ENCODE measurements at regions of chr11 and their contacts with region 1.

Region 1: GRCh38 chr11:3797329-3798095 is at the start of gene NUP98:
- DNase-seq: peak; percentile 100
- ATAC-seq: peak; percentile 91
- H3K4me3 ChIP-seq: peak within 1 kb of the TSS; percentile 93 to 98 (median 96)
- H3K4me3 Mint-ChIP-seq: peak within 1 kb of the TSS; percentile 97
- H3K27ac ChIP-seq: peak within 1 kb of the TSS; percentile 93 to 97
- H3K27ac Mint-ChIP-seq: peak within 1 kb of the TSS; percentile 97
- H3K4me1 ChIP-seq: peaks cover 21 to 31% of the 10 kb centered on the region in 2 donors
- H3K4me1 Mint-ChIP-seq: peaks cover 35% of the 10 kb centered on the region
- H3K27me3 ChIP-seq: no peaks in the 10 kb centered on the region
- H3K27me3 Mint-ChIP-seq: no peaks in the 10 kb centered on the region
- CTCF ChIP-seq: no peak
- total RNA-seq, gene NUP98: 105 and 111 TPM in 2 replicates

Region 2: DNA sequence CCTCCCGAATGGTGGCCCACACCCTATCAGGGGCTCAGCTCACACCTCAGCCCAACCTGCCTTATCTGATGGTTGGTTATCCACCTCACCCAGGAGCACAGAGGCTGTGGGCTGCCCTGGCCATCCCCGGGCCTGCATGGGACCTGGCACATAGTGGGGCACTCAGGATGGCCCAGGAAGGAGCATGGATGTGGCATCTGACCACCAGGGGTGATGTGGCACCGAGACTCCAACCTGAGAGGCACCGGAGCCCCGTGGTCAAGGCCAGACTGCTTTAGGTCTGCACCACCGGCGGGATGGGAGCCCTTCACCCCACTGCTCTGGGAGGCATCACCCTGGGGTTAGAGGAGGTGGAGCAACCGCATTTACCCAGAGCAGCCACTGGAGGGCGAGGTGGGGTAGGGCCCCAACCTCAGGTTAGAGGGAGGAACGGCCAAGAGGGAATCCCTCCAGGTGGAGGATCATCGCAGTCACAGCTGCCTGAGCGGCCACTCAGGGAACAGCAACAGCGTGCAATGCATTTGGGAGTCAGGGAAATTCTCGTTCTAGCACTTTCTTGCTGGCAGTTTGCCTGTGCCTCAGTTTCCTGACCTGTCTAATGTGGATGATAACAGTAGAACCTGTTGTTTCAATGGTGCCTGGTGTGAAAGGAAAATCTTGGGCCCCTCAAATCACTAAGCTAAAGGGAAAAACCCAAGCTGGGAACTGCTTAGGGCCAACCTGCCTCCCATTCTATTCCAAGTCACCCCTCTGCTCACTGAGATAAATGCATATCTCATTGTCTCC is 687.4 kb before region 1 on chr11:
- CTCF ChIA-PET with region 1: no interaction called
- POLR2A ChIA-PET with region 1: no interaction called
- intact Hi-C with region 1: no loop called
- DNase-seq: no peak
- ATAC-seq: no peak
- H3K4me3 ChIP-seq: no peak overlapping the region
- H3K4me3 Mint-ChIP-seq: no peak overlapping the region
- H3K27ac ChIP-seq: no peak overlapping the region
- H3K27ac Mint-ChIP-seq: no peak overlapping the region
- H3K4me1 ChIP-seq: no peaks in the 10 kb centered on the region
- H3K4me1 Mint-ChIP-seq: no peaks in the 10 kb centered on the region
- H3K27me3 ChIP-seq: no peaks in the 10 kb centered on the region
- H3K27me3 Mint-ChIP-seq: peaks cover 14% of the 10 kb centered on the region
- CTCF ChIP-seq: peak; percentile 24

Region 3: GRCh38 chr11:3781423-3781822 is 16.1 kb before region 1 on chr11:
- CTCF ChIA-PET with region 1: interaction called, 5 read pairs
- POLR2A ChIA-PET with region 1: no interaction called
- intact Hi-C with region 1: loop called (anchors 1 kb)
- DNase-seq: no peak
- ATAC-seq: no peak
- H3K4me3 ChIP-seq: no peak overlapping the region
- H3K4me3 Mint-ChIP-seq: no peak overlapping the region
- H3K27ac ChIP-seq: peak overlapping the region in 1 of 2 donors; percentile 50
- H3K27ac Mint-ChIP-seq: peak overlapping the region; percentile 32
- H3K4me1 ChIP-seq: peaks cover 16 to 18% of the 10 kb centered on the region in 2 donors
- H3K4me1 Mint-ChIP-seq: peaks cover 36% of the 10 kb centered on the region
- H3K27me3 ChIP-seq: no peaks in the 10 kb centered on the region
- H3K27me3 Mint-ChIP-seq: no peaks in the 10 kb centered on the region
- CTCF ChIP-seq: no peak

Region 4: GRCh38 chr11:3807909-3808860 is 10.7 kb after region 1 on chr11 and contains the start of gene PGAP2:
- CTCF ChIA-PET with region 1: interaction called, 27 read pairs
- POLR2A ChIA-PET with region 1: interaction called, 4 read pairs
- intact Hi-C with region 1: loop called (anchors 1 kb)
- DNase-seq: peak; percentile 71
- ATAC-seq: peak; percentile 85
- H3K4me3 ChIP-seq: peak within 1 kb of the TSS; percentile 91 to 99 (median 96)
- H3K4me3 Mint-ChIP-seq: peak within 1 kb of the TSS; percentile 98
- H3K27ac ChIP-seq: peak within 1 kb of the TSS; percentile 59 to 60
- H3K27ac Mint-ChIP-seq: peak within 1 kb of the TSS; percentile 92
- H3K4me1 ChIP-seq: peaks cover 6 to 17% of the 10 kb centered on the region in 2 donors
- H3K4me1 Mint-ChIP-seq: peaks cover 11% of the 10 kb centered on the region
- H3K27me3 ChIP-seq: no peaks in the 10 kb centered on the region
- H3K27me3 Mint-ChIP-seq: no peaks in the 10 kb centered on the region
- CTCF ChIP-seq: peak; percentile 61
- total RNA-seq, gene PGAP2: 20.5 and 20.8 TPM in 2 replicates

Region 5: GRCh38 chr11:3841426-3842350 is 44.2 kb after region 1 on chr11:
- CTCF ChIA-PET with region 1: interaction called, 14 read pairs
- POLR2A ChIA-PET with region 1: interaction called, 12 read pairs
- intact Hi-C with region 1: loop called (anchors 1 kb)
- DNase-seq: peak; percentile 99
- ATAC-seq: no peak
- H3K4me3 ChIP-seq: peak overlapping the region; percentile 31 to 89 (median 85)
- H3K4me3 Mint-ChIP-seq: peak overlapping the region; percentile 84
- H3K27ac ChIP-seq: peak overlapping the region; percentile 95 to 98
- H3K27ac Mint-ChIP-seq: peak overlapping the region; percentile 98
- H3K4me1 ChIP-seq: peaks cover 39 to 44% of the 10 kb centered on the region in 2 donors
- H3K4me1 Mint-ChIP-seq: peaks cover 48% of the 10 kb centered on the region
- H3K27me3 ChIP-seq: no peaks in the 10 kb centered on the region
- H3K27me3 Mint-ChIP-seq: no peaks in the 10 kb centered on the region
- CTCF ChIP-seq: peak; percentile 81

Region 6: GRCh38 chr11:4065601-4066377 is 268.3 kb after region 1 on chr11:
- CTCF ChIA-PET with region 1: no interaction called
- POLR2A ChIA-PET with region 1: no interaction called
- intact Hi-C with region 1: no loop called
- DNase-seq: no peak
- ATAC-seq: no peak
- H3K4me3 ChIP-seq: no peak overlapping the region
- H3K4me3 Mint-ChIP-seq: no peak overlapping the region
- H3K27ac ChIP-seq: peak overlapping the region in 1 of 2 donors; percentile 0
- H3K27ac Mint-ChIP-seq: no peak overlapping the region
- H3K4me1 ChIP-seq: peaks cover 18 to 26% of the 10 kb centered on the region in 2 donors
- H3K4me1 Mint-ChIP-seq: peaks cover 45% of the 10 kb centered on the region
- H3K27me3 ChIP-seq: no peaks in the 10 kb centered on the region
- H3K27me3 Mint-ChIP-seq: no peaks in the 10 kb centered on the region
- CTCF ChIP-seq: no peak

Region 7: DNA sequence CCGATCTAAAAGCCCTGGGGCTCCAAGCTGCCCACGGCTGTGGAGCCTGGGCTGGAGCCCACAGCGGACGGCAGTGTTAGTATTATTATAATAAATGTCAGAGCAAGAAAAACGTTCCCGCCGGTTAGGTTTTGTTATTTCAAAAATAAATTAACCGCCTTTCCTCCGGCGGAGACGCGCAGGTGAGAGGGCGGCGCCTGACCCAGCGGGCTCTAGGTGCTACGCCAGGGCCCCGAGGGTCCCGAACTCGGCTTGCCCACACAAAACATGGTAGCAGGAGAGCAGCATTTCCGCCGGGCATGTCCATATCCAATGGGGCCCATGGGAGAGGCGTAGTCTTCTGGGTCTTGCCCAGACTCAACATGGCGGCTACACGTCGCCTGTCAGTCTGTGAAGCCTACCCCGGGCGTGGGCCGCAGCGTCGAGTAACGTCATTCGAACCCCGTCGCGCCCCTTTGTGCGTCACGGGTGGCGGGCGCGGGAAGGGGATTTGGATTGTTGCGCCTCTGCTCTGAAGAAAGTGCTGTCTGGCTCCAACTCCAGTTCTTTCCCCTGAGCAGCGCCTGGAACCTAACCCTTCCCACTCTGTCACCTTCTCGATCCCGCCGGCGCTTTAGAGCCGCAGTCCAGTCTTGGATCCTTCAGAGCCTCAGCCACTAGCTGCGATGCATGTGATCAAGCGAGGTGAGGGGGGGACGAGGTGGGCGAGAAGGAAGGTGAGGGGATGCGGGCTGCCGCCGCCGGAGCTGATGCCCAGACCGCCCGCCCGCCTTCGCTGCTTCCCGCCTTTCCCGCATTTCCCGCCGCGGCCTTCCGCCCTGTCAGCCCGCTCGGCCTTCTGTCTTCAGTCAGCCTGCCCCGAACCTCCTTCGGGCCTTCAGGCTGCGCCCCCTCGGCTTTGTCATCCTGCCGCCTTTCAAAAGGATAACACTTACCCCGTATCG is 297.1 kb after region 1 on chr11 and contains the start of gene RRM1:
- CTCF ChIA-PET with region 1: no interaction called
- POLR2A ChIA-PET with region 1: interaction called, 5 read pairs
- intact Hi-C with region 1: loop called (anchors 1 kb)
- DNase-seq: peak; percentile 95
- ATAC-seq: peak; percentile 99
- H3K4me3 ChIP-seq: peak within 1 kb of the TSS; percentile 60 to 95 (median 84)
- H3K4me3 Mint-ChIP-seq: peak within 1 kb of the TSS; percentile 94
- H3K27ac ChIP-seq: peak within 1 kb of the TSS; percentile 77 to 86
- H3K27ac Mint-ChIP-seq: peak within 1 kb of the TSS; percentile 98
- H3K4me1 ChIP-seq: peaks cover 14 to 28% of the 10 kb centered on the region in 2 donors
- H3K4me1 Mint-ChIP-seq: peaks cover 43% of the 10 kb centered on the region
- H3K27me3 ChIP-seq: no peaks in the 10 kb centered on the region
- H3K27me3 Mint-ChIP-seq: no peaks in the 10 kb centered on the region
- CTCF ChIP-seq: no peak
- total RNA-seq, gene RRM1: 22.2 and 24.5 TPM in 2 replicates

Region 8: GRCh38 chr11:4140067-4140636 is 342.6 kb after region 1 on chr11:
- CTCF ChIA-PET with region 1: no interaction called
- POLR2A ChIA-PET with region 1: no interaction called
- intact Hi-C with region 1: no loop called
- DNase-seq: no peak
- ATAC-seq: no peak
- H3K4me3 ChIP-seq: no peak overlapping the region
- H3K4me3 Mint-ChIP-seq: no peak overlapping the region
- H3K27ac ChIP-seq: no peak overlapping the region
- H3K27ac Mint-ChIP-seq: no peak overlapping the region
- H3K4me1 ChIP-seq: no peaks in the 10 kb centered on the region
- H3K4me1 Mint-ChIP-seq: no peaks in the 10 kb centered on the region
- H3K27me3 ChIP-seq: no peaks in the 10 kb centered on the region
- H3K27me3 Mint-ChIP-seq: no peaks in the 10 kb centered on the region
- CTCF ChIP-seq: no peak

Region 9: GRCh38 chr11:4393209-4393857 is 595.8 kb after region 1 on chr11 and contains the start of gene TRIM21:
- CTCF ChIA-PET with region 1: no interaction called
- POLR2A ChIA-PET with region 1: no interaction called
- intact Hi-C with region 1: loop called (anchors 5 kb)
- DNase-seq: peak; percentile 89
- ATAC-seq: peak; percentile 100
- H3K4me3 ChIP-seq: peak within 1 kb of the TSS; percentile 69 to 99 (median 85)
- H3K4me3 Mint-ChIP-seq: peak within 1 kb of the TSS; percentile 91
- H3K27ac ChIP-seq: peak within 1 kb of the TSS; percentile 68 to 82
- H3K27ac Mint-ChIP-seq: peak within 1 kb of the TSS; percentile 88
- H3K4me1 ChIP-seq: peaks cover 8 to 14% of the 10 kb centered on the region in 2 donors
- H3K4me1 Mint-ChIP-seq: peaks cover 27% of the 10 kb centered on the region
- H3K27me3 ChIP-seq: peaks cover 0 to 2% (median 0%) of the 10 kb centered on the region in 4 experiments
- H3K27me3 Mint-ChIP-seq: peaks cover 5% of the 10 kb centered on the region
- CTCF ChIP-seq: no peak
- total RNA-seq, gene TRIM21: 26.7 and 30.9 TPM in 2 replicates

Measured in B cell (primary cell).